ENCODE measurements at regions of chr12 and their contacts with region 1.

Region 1: DNA sequence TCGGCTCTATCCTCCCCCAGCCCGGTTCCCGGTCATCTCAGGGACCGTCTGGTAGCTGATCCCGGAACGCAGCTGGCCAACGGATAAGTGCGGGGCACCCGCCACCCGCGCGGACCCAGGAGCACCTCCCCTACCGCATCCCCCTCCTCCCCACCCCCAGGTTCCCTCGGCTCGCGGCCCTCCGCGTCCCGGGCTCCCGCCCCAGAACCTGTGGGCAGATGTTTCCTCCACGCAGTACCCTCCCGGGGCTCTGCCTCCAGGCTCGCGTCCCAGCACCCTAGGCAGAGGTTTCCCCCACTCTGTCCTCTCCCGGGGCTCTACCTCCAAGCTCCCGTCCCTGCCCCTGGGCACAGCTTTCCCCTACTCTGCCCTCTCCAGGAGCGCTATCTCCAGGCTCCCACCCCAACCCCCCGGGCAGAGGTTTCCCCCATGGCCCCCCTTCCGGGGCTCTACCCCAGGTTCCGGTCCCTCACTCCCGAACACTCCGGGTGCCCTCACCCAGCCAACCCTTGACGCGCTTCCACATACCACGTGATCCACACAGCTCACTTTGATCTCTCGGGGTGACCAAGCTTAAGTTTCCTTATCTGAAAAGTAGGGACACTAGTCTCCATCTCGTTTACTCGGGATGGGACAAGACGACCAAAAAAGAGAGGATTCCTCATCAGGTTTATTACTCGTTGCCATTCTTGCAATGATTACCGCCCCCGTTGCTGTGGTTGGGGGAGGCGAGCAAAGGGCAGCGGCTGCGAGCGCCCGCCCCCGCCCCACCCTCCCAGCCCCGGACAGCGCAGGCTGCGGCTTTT is at the start of gene CCDC38:
- DNase-seq: peak; percentile 94
- H3K4me3 Mint-ChIP-seq: peak within 1 kb of the TSS; percentile 94
- H3K27ac Mint-ChIP-seq: peak within 1 kb of the TSS; percentile 90
- H3K4me1 Mint-ChIP-seq: peaks cover 8% of the 10 kb centered on the region
- H3K27me3 Mint-ChIP-seq: peaks cover 18% of the 10 kb centered on the region
- total RNA-seq, gene CCDC38: not detected in 2 replicates

Region 2: DNA sequence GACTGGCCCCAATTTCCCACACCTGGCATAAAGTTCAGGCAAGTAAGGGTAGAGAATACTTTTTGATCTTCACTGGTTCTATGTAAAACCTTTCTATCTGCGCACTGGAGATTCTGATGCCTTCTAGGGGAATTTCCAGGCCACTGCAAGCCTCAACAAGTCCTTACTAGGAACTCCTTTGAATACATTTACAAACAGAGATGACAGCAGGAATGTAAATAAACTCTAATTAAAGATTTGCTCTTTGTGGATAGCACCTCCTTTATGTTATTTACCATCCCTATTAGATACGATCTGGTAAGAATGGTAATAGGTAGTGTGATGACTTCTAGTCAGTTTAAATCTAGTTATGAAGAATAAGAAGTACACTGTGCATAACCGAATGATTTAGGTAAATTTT is 221.4 kb before region 1 on chr12:
- intact Hi-C with region 1: no loop called
- DNase-seq: no peak
- H3K4me3 Mint-ChIP-seq: no peak overlapping the region
- H3K27ac Mint-ChIP-seq: no peak overlapping the region
- H3K4me1 Mint-ChIP-seq: no peaks in the 10 kb centered on the region
- H3K27me3 Mint-ChIP-seq: peaks cover 6% of the 10 kb centered on the region

Region 3: GRCh38 chr12:95918194-95918993 is 24.3 kb before region 1 on chr12:
- intact Hi-C with region 1: loop called (anchors 2 kb)
- DNase-seq: peak; percentile 84
- H3K4me3 Mint-ChIP-seq: no peak overlapping the region
- H3K27ac Mint-ChIP-seq: no peak overlapping the region
- H3K4me1 Mint-ChIP-seq: no peaks in the 10 kb centered on the region
- H3K27me3 Mint-ChIP-seq: peaks cover 18% of the 10 kb centered on the region

Region 4: GRCh38 chr12:95998611-95999286 is 56.0 kb after region 1 on chr12:
- intact Hi-C with region 1: loop called (anchors 2 kb)
- DNase-seq: peak; percentile 86
- H3K4me3 Mint-ChIP-seq: no peak overlapping the region
- H3K27ac Mint-ChIP-seq: peak overlapping the region; percentile 7
- H3K4me1 Mint-ChIP-seq: peaks cover 9% of the 10 kb centered on the region
- H3K27me3 Mint-ChIP-seq: no peaks in the 10 kb centered on the region

Region 5: DNA sequence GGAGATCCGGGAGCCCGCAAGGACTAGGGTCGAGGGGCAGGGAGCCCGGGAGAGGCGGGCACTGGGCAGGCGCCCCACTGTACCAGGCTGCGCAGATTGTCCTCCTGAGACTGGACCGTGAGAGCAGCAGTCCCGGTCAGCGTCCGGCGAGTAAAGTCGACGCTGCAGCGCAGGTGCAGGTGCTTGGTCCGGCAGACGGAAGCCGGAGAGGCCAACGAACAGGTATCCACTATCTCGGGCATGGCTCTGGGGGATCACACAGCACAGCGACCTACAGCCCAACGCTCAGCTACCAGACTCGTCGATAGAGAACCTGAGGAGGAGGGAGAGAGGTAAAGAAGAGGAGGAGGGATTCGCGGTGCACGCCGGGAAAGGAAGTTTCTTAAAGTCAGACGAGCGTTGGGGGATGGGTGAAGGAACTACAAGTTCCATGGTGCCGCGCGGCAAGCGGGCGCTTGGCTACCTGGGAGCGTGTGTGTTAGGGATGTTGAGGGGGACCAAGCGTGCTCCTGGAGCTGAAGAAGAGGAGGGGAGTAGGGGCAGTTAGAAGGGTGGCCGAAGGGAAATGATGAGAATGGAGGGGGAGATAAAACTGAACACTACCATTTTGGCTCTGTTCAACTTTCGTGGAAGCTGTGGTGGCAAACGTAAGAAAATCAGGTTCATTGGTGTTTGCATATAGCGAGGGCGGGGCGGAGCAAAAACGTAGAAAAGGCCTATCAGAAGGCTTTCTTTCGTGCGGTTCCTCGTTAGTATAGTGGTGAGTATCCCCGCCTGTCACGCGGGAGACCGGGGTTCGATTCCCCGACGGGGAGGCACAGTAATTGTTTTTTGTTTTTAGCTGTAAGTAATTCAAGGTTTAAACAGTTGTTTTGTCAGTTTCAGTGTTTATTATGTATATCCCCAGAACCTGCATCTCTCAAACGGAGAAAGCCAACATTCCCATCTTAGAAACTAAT is 92.8 kb after region 1 on chr12 and contains the start of gene LTA4H:
- intact Hi-C with region 1: loop called (anchors 2 kb)
- DNase-seq: peak; percentile 98
- H3K4me3 Mint-ChIP-seq: no peak within 1 kb of the TSS
- H3K27ac Mint-ChIP-seq: no peak within 1 kb of the TSS
- H3K4me1 Mint-ChIP-seq: peaks cover 6% of the 10 kb centered on the region
- H3K27me3 Mint-ChIP-seq: no peaks in the 10 kb centered on the region
- total RNA-seq, gene LTA4H: 63.4 and 64.1 TPM in 2 replicates

Region 6: DNA sequence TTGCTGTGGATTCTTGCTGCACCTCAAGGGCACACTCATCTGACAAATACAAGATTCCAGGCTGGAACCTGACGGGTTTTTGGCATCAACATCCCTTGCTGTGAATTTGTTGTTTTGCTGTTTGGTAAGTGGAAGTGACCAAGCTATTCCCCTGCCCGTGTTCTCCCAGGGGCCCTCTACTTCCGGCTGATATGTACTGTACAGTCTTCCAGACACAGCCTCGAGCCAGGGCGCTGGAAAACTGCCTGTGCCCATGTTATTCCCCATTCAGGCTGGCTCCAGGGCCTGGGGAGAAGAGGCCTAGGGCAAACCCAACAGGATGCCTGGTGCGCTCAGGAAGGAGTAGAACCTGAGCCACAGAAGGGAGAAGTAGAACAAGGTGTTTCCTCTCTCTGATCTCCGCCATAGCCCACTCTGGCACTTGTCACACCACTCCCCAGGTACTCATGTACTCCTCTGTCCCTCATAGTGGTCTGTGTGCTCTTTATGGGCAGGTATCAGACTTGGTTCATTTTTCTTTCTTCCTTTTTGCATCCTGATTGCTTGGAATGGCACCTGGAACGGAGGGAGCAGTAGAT is 160.4 kb after region 1 on chr12:
- intact Hi-C with region 1: no loop called
- DNase-seq: no peak
- H3K4me3 Mint-ChIP-seq: no peak overlapping the region
- H3K27ac Mint-ChIP-seq: no peak overlapping the region
- H3K4me1 Mint-ChIP-seq: peaks cover 26% of the 10 kb centered on the region
- H3K27me3 Mint-ChIP-seq: no peaks in the 10 kb centered on the region

Region 7: GRCh38 chr12:96219698-96220206 is 277.0 kb after region 1 on chr12:
- intact Hi-C with region 1: loop called (anchors 10 kb)
- DNase-seq: no peak
- H3K4me3 Mint-ChIP-seq: no peak overlapping the region
- H3K27ac Mint-ChIP-seq: no peak overlapping the region
- H3K4me1 Mint-ChIP-seq: peaks cover 27% of the 10 kb centered on the region
- H3K27me3 Mint-ChIP-seq: no peaks in the 10 kb centered on the region

Measured in activated CD4-positive, alpha-beta T cell treated with anti-CD3 and anti-CD28 coated beads, Interleukin-2, amount 10 ng/mL, durations not matched to agents 24 days and 14 days (primary cell).